Mammary epithelial cell (primary cell): ENCODE measurements at regions of chr1 and their contacts with region 1.

Region 1: DNA sequence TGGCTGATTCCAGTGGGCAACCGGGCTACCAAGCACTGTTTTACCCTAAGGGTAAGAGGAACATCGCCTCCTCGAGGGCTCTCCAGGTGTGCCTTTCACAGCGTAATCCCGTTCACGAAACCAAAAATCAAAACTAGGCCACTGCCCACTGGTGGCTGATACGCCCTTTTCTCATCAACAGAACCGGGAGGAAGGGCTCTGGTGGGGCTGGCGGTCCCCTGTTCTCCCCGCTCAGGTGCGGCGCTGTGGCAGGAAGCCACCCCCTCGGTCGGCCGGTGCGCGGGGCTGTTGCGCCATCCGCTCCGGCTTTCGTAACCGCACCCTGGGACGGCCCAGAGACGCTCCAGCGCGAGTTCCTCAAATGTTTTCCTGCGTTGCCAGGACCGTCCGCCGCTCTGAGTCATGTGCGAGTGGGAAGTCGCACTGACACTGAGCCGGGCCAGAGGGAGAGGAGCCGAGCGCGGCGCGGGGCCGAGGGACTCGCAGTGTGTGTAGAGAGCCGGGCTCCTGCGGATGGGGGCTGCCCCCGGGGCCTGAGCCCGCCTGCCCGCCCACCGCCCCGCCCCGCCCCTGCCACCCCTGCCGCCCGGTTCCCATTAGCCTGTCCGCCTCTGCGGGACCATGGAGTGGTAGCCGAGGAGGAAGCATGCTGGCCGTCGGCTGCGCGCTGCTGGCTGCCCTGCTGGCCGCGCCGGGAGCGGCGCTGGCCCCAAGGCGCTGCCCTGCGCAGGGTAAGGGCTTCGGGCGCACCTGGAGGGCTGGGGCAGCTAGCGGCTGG is at the start of gene IL6R:
- DNase-seq: peak; percentile 94
- H3K4me3 ChIP-seq: peak within 1 kb of the TSS; percentile 64 to 91 (median 84)
- H3K27ac ChIP-seq: peak within 1 kb of the TSS; percentile 83
- H3K4me1 ChIP-seq: peaks cover 33% of the 10 kb centered on the region
- H3K27me3 ChIP-seq: no peaks in the 10 kb centered on the region
- CTCF ChIP-seq: peak; percentile 14 to 63
- total RNA-seq, gene IL6R: 11.4 to 28.7 TPM

Region 2: GRCh38 chr1:154335025-154335714 is 70.0 kb before region 1 on chr1:
- CTCF ChIA-PET with region 1: no interaction called
- dilution Hi-C with region 1: loop called (anchors 5 kb)
- in situ Hi-C with region 1: no loop called
- intact Hi-C with region 1: no loop called
- DNase-seq: peak; percentile 54
- H3K4me3 ChIP-seq: no peak overlapping the region
- H3K27ac ChIP-seq: no peak overlapping the region
- H3K4me1 ChIP-seq: peaks cover 3% of the 10 kb centered on the region
- H3K27me3 ChIP-seq: no peaks in the 10 kb centered on the region
- CTCF ChIP-seq: peak; percentile 80 to 88

Region 3: GRCh38 chr1:154418062-154418921 is 13.1 kb after region 1 on chr1:
- CTCF ChIA-PET with region 1: no interaction called
- dilution Hi-C with region 1: no loop called
- in situ Hi-C with region 1: no loop called
- intact Hi-C with region 1: loop called (anchors 1 kb)
- DNase-seq: peak; percentile 99
- H3K4me3 ChIP-seq: no peak overlapping the region
- H3K27ac ChIP-seq: peak overlapping the region; percentile 79
- H3K4me1 ChIP-seq: peaks cover 46% of the 10 kb centered on the region
- H3K27me3 ChIP-seq: no peaks in the 10 kb centered on the region
- CTCF ChIP-seq: no peak

Region 4: DNA sequence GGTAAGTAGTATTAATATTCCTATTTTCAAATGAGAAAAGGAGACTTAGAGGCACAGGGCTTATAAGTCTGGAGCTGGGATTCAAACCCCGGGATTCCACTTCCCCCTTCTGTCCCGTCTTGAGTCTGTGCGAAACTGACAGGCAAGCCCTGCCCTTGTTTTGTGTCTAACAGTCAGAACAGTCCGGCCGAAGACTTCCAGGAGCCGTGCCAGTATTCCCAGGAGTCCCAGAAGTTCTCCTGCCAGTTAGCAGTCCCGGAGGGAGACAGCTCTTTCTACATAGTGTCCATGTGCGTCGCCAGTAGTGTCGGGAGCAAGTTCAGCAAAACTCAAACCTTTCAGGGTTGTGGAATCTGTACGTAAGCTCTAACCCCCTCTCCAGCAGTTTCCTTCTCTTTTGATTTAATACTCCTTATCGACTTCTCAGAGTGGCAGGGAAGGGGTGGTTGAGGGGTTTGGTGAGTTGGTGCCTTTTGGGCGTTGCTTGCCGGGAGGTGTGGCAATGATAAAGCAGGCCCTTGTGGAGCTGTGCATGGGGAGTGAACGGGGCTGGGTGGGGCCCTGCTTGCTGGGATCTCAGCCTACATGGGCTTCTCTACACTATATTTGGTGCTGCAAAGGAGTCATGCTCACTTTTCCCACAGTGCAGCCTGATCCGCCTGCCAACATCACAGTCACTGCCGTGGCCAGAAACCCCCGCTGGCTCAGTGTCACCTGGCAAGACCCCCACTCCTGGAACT is 29.3 kb after region 1 on chr1:
- CTCF ChIA-PET with region 1: no interaction called
- dilution Hi-C with region 1: no loop called
- in situ Hi-C with region 1: no loop called
- intact Hi-C with region 1: loop called (anchors 1 kb)
- DNase-seq: no peak
- H3K4me3 ChIP-seq: no peak overlapping the region
- H3K27ac ChIP-seq: no peak overlapping the region
- H3K4me1 ChIP-seq: peaks cover 38% of the 10 kb centered on the region
- H3K27me3 ChIP-seq: no peaks in the 10 kb centered on the region
- CTCF ChIP-seq: no peak

Region 5: DNA sequence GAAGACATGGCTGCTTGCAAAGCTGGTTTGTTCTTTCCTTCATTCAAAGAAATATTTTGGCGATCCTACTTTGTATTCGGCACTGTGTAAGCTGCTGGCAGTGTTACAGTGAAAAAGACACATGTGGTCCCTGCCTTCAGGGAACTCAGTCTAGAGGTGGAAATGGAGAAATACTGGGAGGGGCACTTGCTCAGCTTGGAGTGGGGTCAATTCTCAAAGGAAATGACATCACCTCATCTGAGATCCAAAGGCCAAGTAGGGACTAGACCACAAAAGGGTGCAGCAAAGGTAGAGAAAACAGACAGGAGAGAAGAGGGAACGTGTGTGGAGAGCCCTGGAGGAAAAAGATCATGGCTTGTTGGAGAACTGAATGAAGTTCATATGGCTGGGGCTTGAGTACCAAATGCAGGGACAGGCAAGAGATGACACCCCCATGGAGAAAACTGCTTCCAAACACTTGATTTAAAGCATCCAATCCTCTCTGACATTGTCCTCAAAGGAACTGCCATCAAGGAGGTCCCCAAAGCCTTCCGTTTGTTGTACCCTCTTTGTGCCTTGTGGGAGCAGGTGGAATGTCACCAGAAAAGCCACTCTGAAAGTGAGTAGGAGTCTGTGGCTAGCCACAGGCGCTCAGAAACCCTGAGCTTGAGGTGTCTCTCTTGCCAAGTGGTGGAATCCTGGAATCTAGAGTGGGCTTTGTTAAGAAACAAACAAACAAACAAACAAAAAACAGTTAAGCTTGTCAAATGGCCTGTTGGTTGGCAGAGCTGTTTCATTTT is 48.6 kb after region 1 on chr1:
- CTCF ChIA-PET with region 1: no interaction called
- dilution Hi-C with region 1: loop called (anchors 5 kb)
- in situ Hi-C with region 1: loop called in 1 of 2 experiments (anchors 10 kb)
- intact Hi-C with region 1: no loop called
- DNase-seq: peak; percentile 74
- H3K4me3 ChIP-seq: no peak overlapping the region
- H3K27ac ChIP-seq: no peak overlapping the region
- H3K4me1 ChIP-seq: peaks cover 12% of the 10 kb centered on the region
- H3K27me3 ChIP-seq: no peaks in the 10 kb centered on the region
- CTCF ChIP-seq: no peak

Region 6: DNA sequence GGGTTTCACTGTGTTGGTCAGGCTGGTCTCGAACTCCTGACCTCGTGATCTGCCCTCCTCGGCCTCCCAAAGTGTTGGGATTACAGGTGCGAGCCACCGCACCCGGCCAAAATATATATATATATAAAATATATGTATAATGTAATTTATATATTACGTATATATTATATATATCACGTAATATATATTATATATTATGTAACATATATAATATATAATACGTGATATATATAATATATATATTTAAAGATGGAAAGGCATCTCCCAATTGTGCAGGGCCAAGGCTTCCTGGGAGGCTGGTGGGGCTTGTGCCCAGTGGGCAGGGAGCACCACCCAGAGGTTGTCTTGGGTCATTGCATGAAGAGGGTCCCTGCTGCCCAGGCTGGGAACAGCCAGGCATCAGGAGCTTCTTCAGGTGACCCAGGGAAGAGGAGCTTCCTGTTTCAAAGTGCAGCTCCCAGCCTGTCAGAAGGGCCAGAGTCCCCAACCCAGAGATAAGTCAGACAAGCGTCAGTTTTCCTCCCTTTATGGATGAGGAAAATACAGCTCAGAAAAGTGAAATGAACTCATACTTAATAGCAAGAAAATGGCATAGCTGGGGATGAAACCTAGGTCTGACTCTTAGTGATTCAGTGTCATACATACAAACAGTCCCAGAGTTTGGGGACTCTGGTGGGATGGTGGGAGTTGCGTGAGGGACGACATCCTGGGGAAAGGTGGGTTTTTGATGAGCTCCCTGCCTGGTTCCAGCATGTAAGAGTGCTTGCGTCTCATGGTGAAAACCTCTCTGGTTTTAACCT is 141.3 kb after region 1 on chr1:
- CTCF ChIA-PET with region 1: no interaction called
- dilution Hi-C with region 1: no loop called
- in situ Hi-C with region 1: no loop called
- intact Hi-C with region 1: loop called (anchors 2 kb)
- DNase-seq: peak; percentile 44
- H3K4me3 ChIP-seq: no peak overlapping the region
- H3K27ac ChIP-seq: no peak overlapping the region
- H3K4me1 ChIP-seq: peaks cover 13% of the 10 kb centered on the region
- H3K27me3 ChIP-seq: no peaks in the 10 kb centered on the region
- CTCF ChIP-seq: peak; percentile 55 to 81